Esophagus squamous epithelium (tissue), 5 donors: ENCODE measurements at regions of chr9 and their contacts with region 1.

Region 1: DNA sequence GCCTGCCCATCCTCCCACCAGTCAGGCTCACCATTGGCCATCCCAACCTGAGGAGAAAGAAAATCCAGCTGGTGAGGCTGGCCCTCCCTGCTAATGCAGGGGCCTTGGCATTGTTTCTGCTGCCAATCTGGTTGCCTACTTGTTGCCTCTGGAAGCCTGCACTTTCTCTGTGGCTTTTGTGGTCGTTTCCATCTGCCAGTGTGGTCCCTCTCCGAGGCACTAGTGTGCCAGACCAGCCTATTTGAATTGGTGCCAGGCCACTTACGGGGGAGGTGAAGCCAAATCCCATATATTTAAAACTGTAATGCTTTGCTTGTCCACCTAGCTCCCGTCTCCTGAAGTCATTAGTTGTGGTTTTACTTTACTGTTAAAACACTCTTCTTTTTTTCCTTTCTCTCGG is 213.4 kb upstream of the ADAMTSL1 start:
- DNase-seq: no peak
- H3K4me3 ChIP-seq: no peak overlapping the region
- H3K27ac ChIP-seq: no peak overlapping the region
- H3K4me1 ChIP-seq: no peaks in the 10 kb centered on the region
- H3K27me3 ChIP-seq: no peaks in the 10 kb centered on the region
- CTCF ChIP-seq: no peak
- POLR2A ChIP-seq: no peak

Region 2: DNA sequence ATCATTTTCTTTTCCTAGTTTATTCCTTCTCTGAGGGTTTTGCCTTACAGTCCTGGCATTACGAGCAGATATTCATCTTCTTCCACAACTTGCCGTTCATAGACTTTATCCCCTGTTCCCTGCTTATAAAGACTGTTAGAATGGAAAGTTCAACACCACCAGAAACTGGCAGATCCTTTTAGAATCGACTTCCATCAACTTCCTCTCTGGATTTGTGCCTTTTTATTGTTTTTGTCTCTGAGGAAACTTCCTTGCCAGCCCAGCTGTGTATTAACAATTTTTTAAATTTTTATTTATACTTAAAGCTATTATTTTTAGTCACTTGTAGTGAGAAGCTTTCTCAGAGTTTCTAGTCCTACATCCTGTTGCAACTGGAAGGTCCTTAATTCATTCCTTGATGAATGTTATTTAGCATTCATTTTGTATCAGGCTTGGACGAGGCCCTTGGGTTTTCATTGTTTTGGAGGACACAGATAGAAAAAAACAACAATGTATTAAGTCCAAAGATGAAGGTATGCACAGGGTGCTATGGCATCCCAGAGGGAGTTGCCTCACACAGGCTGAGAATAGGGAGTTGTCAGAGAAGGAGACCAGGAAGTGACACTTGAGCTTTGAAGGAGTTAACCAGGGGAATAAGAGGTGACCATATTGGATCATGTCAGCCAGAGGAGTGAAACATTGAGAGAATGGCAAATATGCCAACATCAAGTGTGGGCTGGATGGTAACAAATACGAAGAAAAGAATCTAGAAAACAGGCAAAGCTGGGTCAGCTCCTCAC is 294.8 kb after region 1 on chr9:
- intact Hi-C with region 1: no loop called
- DNase-seq: no peak
- H3K4me3 ChIP-seq: no peak overlapping the region
- H3K27ac ChIP-seq: no peak overlapping the region
- H3K4me1 ChIP-seq: no peaks in the 10 kb centered on the region
- H3K27me3 ChIP-seq: no peaks in the 10 kb centered on the region
- CTCF ChIP-seq: no peak
- POLR2A ChIP-seq: no peak

Region 3: DNA sequence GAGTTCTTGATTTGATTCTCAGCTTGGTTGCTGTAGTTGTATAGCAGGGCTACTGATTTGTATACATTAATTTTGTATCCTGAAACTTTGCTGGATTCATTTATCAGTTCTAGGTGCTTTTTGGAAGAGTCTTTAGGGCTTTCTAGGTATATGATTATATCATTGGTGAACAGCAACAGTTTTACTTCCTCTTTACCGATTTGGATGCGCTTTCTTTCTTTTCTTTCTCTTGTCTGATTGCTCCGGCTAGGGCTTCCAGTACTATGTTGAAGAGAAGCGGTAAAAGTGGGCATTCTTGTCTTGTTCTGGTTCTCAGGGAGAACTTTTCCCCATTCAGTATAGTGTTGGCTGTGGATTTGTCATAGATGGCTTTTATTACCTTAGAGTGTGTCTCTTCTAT is 613.5 kb after region 1 on chr9:
- intact Hi-C with region 1: loop called (anchors 5 kb)
- DNase-seq: no peak
- H3K4me3 ChIP-seq: no peak overlapping the region
- H3K27ac ChIP-seq: no peak overlapping the region
- H3K4me1 ChIP-seq: no peaks in the 10 kb centered on the region
- H3K27me3 ChIP-seq: no peaks in the 10 kb centered on the region
- CTCF ChIP-seq: no peak
- POLR2A ChIP-seq: no peak